Aorta (tissue), 5 donors: ENCODE measurements at regions of chr7 and their contacts with region 1.

Region 1: DNA sequence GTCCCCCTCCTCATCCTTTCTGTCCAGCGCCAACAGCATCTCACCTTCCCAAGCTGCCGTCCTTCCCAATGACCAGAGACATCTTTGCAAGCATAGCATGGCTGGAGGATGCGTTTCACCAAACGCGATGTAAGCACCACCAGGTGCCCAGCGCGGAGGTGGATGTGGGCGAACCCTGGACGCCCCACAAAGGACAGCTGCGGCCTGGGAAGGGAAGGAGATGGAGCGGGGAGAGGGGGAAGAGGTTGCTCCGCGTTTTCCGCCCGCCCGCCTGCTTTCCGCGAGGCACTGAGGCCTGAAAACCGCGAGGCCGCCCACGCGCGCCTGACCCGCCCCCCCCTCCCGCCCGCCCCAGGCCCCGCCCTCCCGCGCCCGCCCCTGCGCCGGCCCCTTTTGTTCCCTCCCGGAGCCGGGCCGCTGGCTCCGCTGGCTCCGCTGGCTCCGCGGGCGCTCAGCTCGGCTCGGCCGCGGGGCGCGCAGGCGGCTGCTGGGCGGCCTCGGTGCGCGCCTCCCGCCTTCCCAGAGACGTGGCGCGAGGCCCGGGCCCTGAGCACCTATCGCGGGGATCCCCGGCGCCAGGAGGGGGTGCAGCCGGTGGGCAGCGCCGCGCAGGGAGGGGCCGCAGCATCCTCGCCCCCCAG is at the start of gene CLIP2:
- DNase-seq: peak; percentile 88 to 94
- ATAC-seq: peak; percentile 82
- H3K4me3 ChIP-seq: peak within 1 kb of the TSS; percentile 77 to 96
- H3K27ac ChIP-seq: peak within 1 kb of the TSS in 1 of 2 donors; percentile 41
- H3K4me1 ChIP-seq: no peaks in the 10 kb centered on the region
- H3K27me3 ChIP-seq: no peaks in the 10 kb centered on the region
- total RNA-seq, gene CLIP2: 27.5 to 35.7 TPM

Region 2: GRCh38 chr7:74254129-74254857 is 34.8 kb before region 1 on chr7 and contains the start of gene RFC2:
- intact Hi-C with region 1: loop called (anchors 5 kb)
- DNase-seq: peak; percentile 98 to 99
- ATAC-seq: peak; percentile 100
- H3K4me3 ChIP-seq: peak within 1 kb of the TSS; percentile 70 to 85
- H3K27ac ChIP-seq: peak within 1 kb of the TSS in 1 of 2 donors; percentile 60
- H3K4me1 ChIP-seq: no peaks in the 10 kb centered on the region
- H3K27me3 ChIP-seq: no peaks in the 10 kb centered on the region
- total RNA-seq, gene RFC2: 13.7 to 14.2 TPM

Region 3: DNA sequence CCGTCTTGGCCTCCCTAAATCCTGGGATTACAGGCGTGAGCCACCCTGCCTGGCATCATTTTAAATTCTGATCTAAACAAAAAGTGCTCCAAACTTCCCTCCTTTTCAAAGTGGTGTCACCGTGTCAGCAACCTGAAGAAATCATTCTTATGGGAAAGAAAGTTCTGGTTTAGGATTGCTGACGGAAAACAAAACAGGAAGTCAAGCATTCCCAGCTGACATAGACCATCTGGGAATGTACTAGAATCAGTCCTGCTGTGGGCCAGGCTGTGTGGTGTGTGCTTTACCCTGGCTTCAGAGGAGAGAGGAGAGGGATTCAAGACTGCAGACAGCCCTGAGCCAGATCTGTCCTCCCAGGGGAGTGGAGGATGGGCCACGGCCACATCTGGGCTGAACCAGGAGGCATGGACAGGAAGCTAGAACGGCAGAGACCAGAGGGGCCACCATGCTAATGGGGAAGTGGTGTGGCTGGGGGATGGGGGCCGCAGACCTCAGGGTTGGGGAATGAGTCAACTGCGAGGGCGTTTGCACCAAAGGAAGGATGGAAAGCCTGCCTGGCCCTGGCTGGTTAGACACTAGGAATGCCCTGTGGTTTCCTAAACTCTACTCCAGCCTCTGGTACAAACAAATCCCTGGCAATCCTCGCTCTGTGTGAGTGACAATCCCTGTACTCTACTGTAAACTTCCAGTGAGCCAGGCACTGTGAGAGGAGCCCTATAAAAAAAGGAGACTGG is 16.7 kb before region 1 on chr7:
- intact Hi-C with region 1: loop called (anchors 1 to 2 kb)
- DNase-seq: peak; percentile 89 to 93
- ATAC-seq: peak; percentile 72
- H3K4me3 ChIP-seq: no peak overlapping the region
- H3K27ac ChIP-seq: peak overlapping the region in 1 of 2 donors; percentile 65
- H3K4me1 ChIP-seq: no peaks in the 10 kb centered on the region
- H3K27me3 ChIP-seq: no peaks in the 10 kb centered on the region

Region 4: GRCh38 chr7:74365322-74366022 is 76.3 kb after region 1 on chr7:
- intact Hi-C with region 1: no loop called
- DNase-seq: peak in 1 of 2 donors; percentile 70
- ATAC-seq: peak; percentile 70
- H3K4me3 ChIP-seq: no peak overlapping the region
- H3K27ac ChIP-seq: no peak overlapping the region
- H3K4me1 ChIP-seq: no peaks in the 10 kb centered on the region
- H3K27me3 ChIP-seq: no peaks in the 10 kb centered on the region

Region 5: DNA sequence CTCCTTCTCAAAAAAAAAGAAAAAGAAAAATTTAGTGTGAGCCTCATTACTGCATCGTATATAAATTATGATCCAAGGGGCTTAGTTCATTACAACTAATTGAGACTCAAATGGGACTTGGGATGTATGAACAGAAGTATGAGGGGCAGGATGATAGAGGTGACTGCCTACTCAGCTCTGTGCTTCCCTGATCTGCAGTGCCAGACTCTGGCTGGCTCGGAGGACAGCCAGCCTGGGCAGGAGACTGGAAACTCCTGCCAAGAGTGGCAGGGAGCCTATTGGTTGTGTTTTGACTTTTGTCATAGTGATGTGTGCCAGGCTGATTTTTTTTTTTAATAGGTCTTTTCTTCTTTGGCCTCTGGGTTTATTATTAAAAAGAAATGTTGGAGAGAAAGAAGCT is 90.8 kb after region 1 on chr7:
- intact Hi-C with region 1: loop called in 1 of 2 experiments (anchors 5 kb)
- DNase-seq: peak in 1 of 2 donors; percentile 68
- ATAC-seq: peak; percentile 85
- H3K4me3 ChIP-seq: no peak overlapping the region
- H3K27ac ChIP-seq: no peak overlapping the region
- H3K4me1 ChIP-seq: peaks cover 0 to 3% of the 10 kb centered on the region in 2 donors
- H3K27me3 ChIP-seq: no peaks in the 10 kb centered on the region